ENCODE measurements at regions of chr9 and their contacts with region 1.

Region 1: GRCh38 chr9:70111042-70111602 is 67.5 kb downstream of the MAMDC2 start:
- DNase-seq: peak; percentile 79
- H3K4me3 Mint-ChIP-seq: no peak overlapping the region
- H3K27ac Mint-ChIP-seq: no peak overlapping the region
- H3K4me1 Mint-ChIP-seq: peaks cover 30% of the 10 kb centered on the region
- H3K27me3 Mint-ChIP-seq: no peaks in the 10 kb centered on the region
- CTCF ChIP-seq: peak; percentile 80

Region 2: GRCh38 chr9:69633716-69634115 is 477.4 kb before region 1 on chr9:
- CTCF ChIA-PET with region 1: no interaction called
- POLR2A ChIA-PET with region 1: no interaction called
- intact Hi-C with region 1: no loop called
- DNase-seq: no peak
- H3K4me3 Mint-ChIP-seq: no peak overlapping the region
- H3K27ac Mint-ChIP-seq: no peak overlapping the region
- H3K4me1 Mint-ChIP-seq: no peaks in the 10 kb centered on the region
- H3K27me3 Mint-ChIP-seq: peaks cover 30% of the 10 kb centered on the region
- CTCF ChIP-seq: no peak

Region 3: GRCh38 chr9:69672596-69673310 is 438.4 kb before region 1 on chr9:
- CTCF ChIA-PET with region 1: interaction called, 4 read pairs
- POLR2A ChIA-PET with region 1: no interaction called
- intact Hi-C with region 1: loop called (anchors 10 kb)
- DNase-seq: peak; percentile 84
- H3K4me3 Mint-ChIP-seq: peak overlapping the region; percentile 70
- H3K27ac Mint-ChIP-seq: no peak overlapping the region
- H3K4me1 Mint-ChIP-seq: peaks cover 6% of the 10 kb centered on the region
- H3K27me3 Mint-ChIP-seq: peaks cover 15% of the 10 kb centered on the region
- CTCF ChIP-seq: peak; percentile 82

Region 4: GRCh38 chr9:69971643-69972449 is 139.3 kb before region 1 on chr9:
- CTCF ChIA-PET with region 1: interaction called, 684 read pairs
- POLR2A ChIA-PET with region 1: interaction called, 17 read pairs
- intact Hi-C with region 1: loop called (anchors 1 kb)
- DNase-seq: peak; percentile 73
- H3K4me3 Mint-ChIP-seq: no peak overlapping the region
- H3K27ac Mint-ChIP-seq: peak overlapping the region; percentile 91
- H3K4me1 Mint-ChIP-seq: peaks cover 25% of the 10 kb centered on the region
- H3K27me3 Mint-ChIP-seq: no peaks in the 10 kb centered on the region
- CTCF ChIP-seq: peak; percentile 94

Region 5: GRCh38 chr9:70013598-70014196 is 97.4 kb before region 1 on chr9:
- CTCF ChIA-PET with region 1: interaction called, 16 read pairs
- POLR2A ChIA-PET with region 1: no interaction called
- intact Hi-C with region 1: no loop called
- DNase-seq: peak; percentile 78
- H3K4me3 Mint-ChIP-seq: peak overlapping the region; percentile 5
- H3K27ac Mint-ChIP-seq: peak overlapping the region; percentile 65
- H3K4me1 Mint-ChIP-seq: peaks cover 11% of the 10 kb centered on the region
- H3K27me3 Mint-ChIP-seq: no peaks in the 10 kb centered on the region
- CTCF ChIP-seq: no peak

Region 6: DNA sequence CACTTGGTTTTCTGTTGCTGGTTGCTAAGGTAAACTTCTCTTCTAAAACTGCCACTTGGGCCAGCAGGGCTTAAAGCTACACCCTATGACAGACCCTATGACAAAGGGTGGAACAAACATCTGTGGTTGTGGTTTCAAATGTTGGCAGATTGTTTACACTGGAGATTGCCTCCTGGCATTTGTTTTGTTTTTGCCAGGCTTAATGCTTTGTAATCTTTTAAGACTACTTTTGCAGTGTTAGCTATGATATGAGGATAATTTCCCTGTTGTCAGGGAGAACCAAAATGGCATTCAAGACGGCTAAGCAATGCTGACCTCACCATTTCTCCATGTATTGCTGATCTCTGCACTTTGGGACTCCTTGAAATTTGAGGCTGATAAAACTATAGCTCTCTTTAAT is 17.2 kb before region 1 on chr9:
- CTCF ChIA-PET with region 1: interaction called, 77 read pairs
- POLR2A ChIA-PET with region 1: no interaction called
- intact Hi-C with region 1: no loop called
- DNase-seq: peak; percentile 17
- H3K4me3 Mint-ChIP-seq: no peak overlapping the region
- H3K27ac Mint-ChIP-seq: no peak overlapping the region
- H3K4me1 Mint-ChIP-seq: peaks cover 5% of the 10 kb centered on the region
- H3K27me3 Mint-ChIP-seq: no peaks in the 10 kb centered on the region
- CTCF ChIP-seq: no peak

Region 7: GRCh38 chr9:70258692-70259511 is 147.8 kb after region 1 on chr9 and contains the start of gene SMC5:
- CTCF ChIA-PET with region 1: interaction called, 16 read pairs
- POLR2A ChIA-PET with region 1: interaction called, 4 read pairs
- intact Hi-C with region 1: no loop called
- DNase-seq: peak; percentile 90
- H3K4me3 Mint-ChIP-seq: peak within 1 kb of the TSS; percentile 97
- H3K27ac Mint-ChIP-seq: peak within 1 kb of the TSS; percentile 99
- H3K4me1 Mint-ChIP-seq: peaks cover 63% of the 10 kb centered on the region
- H3K27me3 Mint-ChIP-seq: no peaks in the 10 kb centered on the region
- CTCF ChIP-seq: no peak
- total RNA-seq, gene SMC5: 29.8 and 31.9 TPM in 2 replicates